Activated T-helper 1 cell treated with anti-CD3 and anti-CD28 coated beads, Interleukin-12 subunit alpha, Interleukin-12 subunit beta, Interleukin-2, Interleukin-4 antibody, amounts not matched to agents 30 ng/mL and 10 ng/mL and 1 ng/mL, durations not matched to agents 14 hours and 24 hours and 36 hours (primary cell): ENCODE measurements at regions of chr2 and their contacts with region 1.

Region 1: DNA sequence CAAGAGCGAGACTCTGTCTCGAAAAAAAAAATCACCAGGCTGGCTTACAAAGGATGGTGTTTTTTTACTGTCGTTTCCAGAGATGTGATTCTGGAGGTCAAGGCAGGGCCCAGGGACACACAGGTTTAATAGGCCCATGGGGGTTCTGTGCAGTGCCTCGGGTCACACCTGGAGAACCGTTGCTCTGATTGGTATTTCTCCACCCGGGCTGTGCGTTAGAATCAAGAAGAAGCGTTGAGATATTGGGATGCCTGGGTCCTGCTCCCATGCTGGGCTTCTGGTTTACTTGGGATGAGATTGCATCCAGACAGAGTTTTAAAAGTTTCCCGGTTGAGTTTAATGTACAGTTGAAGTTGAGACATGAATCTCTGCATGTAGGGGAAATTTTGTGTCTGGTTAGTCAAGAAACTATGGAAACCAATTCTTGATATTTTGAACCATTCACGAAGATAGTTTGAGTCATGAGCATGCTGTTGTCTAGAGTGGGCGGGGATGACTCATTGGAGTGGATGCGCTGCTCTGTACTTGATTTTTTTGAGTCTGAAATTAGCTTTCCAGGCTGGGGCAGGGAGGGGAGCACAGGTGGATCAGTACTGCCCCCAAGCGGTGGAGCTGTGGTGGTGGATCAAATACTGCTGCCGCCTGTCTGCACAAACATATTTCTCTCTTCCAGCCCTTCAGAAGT is 50.1 kb downstream of the GREB1 start:
- DNase-seq: peak; percentile 57
- H3K4me3 Mint-ChIP-seq: no peak overlapping the region
- H3K27ac Mint-ChIP-seq: peak overlapping the region; percentile 68
- H3K4me1 Mint-ChIP-seq: peaks cover 10% of the 10 kb centered on the region
- H3K27me3 Mint-ChIP-seq: peaks cover 11% of the 10 kb centered on the region

Region 2: DNA sequence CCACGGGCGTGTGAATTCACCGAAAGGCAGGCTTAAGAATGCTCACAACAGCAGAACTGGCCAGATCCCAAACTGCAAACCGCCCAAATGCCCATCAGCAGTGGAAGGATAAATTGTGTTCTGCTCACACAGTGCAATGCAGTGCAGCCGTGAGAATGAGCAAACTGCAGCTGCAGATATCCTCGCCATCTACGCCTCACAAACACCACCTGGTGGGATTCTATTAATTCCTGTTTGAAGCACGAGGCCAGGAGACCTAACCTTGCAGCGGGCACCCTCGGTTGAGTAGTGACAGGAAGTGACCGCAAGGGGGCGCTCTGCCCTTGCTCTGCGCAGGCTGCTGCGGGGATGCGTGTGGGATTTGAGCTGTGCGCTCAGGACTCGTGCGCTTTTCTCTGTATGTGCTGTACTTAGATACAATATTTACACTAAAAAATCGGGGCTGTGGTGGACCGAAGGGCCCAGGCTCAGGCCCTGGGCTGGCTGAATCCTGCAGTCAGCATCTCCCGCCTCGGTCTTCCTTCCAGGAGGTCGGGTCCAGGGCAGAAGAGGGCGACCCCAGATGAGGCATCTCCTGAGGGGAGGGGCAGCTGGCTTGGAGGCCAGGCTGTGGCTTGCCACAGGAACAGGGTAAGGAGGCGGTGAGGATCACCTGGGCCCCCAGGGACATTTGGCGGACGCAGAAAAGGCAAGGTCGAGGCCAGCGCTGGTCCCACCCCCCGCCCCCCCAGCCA is 751.6 kb before region 1 on chr2:
- intact Hi-C with region 1: loop called (anchors 1 kb)
- DNase-seq: peak; percentile 74
- H3K4me3 Mint-ChIP-seq: no peak overlapping the region
- H3K27ac Mint-ChIP-seq: no peak overlapping the region
- H3K4me1 Mint-ChIP-seq: peaks cover 6% of the 10 kb centered on the region
- H3K27me3 Mint-ChIP-seq: peaks cover 22% of the 10 kb centered on the region

Region 3: DNA sequence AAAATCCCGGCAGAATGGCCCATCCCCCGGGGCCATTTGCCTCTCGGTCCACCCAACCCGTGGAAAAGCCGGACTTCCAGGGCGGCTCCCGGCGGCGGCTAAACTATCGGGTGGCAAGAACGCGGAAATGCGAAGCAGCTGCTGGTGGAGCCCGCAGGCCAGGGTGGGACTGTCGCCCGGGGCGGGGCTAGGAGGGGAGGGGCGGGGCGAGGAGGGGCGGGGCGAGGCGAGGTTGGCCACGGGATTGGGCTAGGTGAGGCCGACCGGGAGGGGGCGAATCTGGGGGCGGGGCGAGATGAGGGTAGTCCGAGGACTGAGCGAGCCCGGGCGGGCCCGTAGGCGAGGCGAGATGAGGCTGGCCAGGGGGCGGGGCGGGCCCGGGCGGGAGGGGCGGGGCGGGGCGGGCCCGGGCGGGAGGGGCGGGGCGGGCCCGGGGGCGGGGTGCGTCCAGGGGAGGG is 429.0 kb before region 1 on chr2:
- intact Hi-C with region 1: loop called (anchors 1 kb)
- DNase-seq: peak; percentile 94
- H3K4me3 Mint-ChIP-seq: peak overlapping the region; percentile 85
- H3K27ac Mint-ChIP-seq: peak overlapping the region; percentile 83
- H3K4me1 Mint-ChIP-seq: peaks cover 12% of the 10 kb centered on the region
- H3K27me3 Mint-ChIP-seq: peaks cover 7% of the 10 kb centered on the region

Region 4: GRCh38 chr2:11344342-11344955 is 239.5 kb before region 1 on chr2 and contains the start of gene ROCK2:
- intact Hi-C with region 1: loop called (anchors 2 kb)
- DNase-seq: peak; percentile 62
- H3K4me3 Mint-ChIP-seq: peak within 1 kb of the TSS; percentile 99
- H3K27ac Mint-ChIP-seq: peak within 1 kb of the TSS; percentile 95
- H3K4me1 Mint-ChIP-seq: peaks cover 35% of the 10 kb centered on the region
- H3K27me3 Mint-ChIP-seq: peaks cover 14% of the 10 kb centered on the region
- total RNA-seq, gene ROCK2: 20.5 and 21.7 TPM in 2 replicates

Region 5: DNA sequence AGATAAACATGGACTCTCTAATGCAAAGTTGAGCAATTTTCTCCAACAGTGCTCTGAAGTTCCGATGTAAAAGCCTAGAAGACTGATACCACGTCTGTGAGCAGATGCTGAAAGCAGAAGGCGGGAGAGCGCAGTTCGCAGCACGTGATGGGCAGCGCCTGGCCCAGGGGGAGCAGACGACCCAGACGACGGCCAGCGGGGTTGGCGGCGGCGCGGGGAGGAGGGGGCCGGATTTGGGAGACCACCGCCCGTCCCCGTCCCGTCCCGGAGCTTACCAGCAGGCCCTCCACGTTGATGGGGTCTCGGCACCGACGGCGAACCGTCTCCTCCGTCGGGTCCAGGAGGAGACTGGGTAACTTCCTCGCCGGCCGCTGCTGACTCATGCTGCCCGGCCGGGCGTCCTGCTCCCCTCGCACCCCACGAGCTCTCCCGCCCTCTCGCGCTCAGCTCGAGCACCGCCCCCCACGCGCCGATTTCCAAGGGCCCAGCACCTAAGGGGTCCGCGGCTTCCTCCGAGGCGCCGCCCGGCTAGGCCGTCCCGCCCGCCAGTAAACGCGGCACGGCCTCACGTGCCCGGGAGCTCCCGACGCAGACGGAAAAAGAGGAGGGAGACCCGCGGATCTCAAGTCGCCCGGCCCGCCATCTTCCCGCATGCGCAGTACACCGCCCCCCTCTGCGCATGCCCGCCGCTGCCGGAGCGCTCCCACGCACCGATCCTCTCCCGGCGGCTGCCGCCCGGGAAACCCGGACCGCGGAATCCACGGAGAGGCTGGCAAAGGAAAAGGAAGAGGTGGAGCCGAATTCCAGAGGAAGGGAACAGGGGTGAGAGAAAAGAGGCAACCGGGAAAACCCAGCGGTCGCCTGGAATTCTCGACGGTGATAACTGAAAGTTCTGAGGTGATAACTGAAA is 118.2 kb before region 1 on chr2 and contains the start of gene E2F6:
- intact Hi-C with region 1: loop called (anchors 1 kb)
- DNase-seq: peak; percentile 82
- H3K4me3 Mint-ChIP-seq: peak within 1 kb of the TSS; percentile 86
- H3K27ac Mint-ChIP-seq: peak within 1 kb of the TSS; percentile 92
- H3K4me1 Mint-ChIP-seq: peaks cover 34% of the 10 kb centered on the region
- H3K27me3 Mint-ChIP-seq: no peaks in the 10 kb centered on the region
- total RNA-seq, gene E2F6: 22.1 and 23.7 TPM in 2 replicates

Region 6: DNA sequence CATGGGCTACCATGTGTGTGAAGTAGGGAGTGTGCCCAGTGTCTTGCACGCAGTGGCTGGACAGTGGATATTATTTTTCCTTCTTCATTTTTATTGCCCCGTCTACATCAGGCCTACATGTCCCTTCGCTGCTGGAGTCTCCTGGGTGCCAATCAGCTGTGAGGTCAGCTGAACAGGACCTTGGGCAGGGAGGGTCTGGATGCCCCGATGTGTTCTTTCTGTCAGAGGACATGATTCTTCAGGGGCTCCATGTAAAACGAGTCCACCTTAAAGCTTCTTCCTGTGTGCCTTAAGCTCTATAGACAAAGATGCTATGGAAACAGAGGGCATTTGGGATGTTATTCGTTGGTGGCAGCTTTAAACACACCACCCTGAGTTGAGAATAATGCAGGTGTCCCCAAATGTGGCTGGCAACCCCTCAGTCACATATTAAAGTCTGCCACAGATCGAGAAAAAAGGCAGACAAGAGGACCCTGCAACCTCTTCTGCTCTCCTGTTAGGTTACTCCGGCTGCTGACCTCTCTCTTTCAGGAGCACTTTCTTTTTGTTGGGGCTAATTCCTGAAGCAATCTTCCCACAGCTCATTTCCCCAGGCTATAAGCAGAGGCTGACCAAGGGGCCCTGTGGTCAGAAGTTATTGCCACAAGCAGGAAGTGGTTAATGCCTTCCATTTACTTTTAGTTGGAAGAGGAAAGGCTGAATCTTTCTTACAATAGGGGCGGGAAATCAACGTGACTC is 30.2 kb before region 1 on chr2:
- intact Hi-C with region 1: no loop called
- DNase-seq: no peak
- H3K4me3 Mint-ChIP-seq: no peak overlapping the region
- H3K27ac Mint-ChIP-seq: no peak overlapping the region
- H3K4me1 Mint-ChIP-seq: no peaks in the 10 kb centered on the region
- H3K27me3 Mint-ChIP-seq: peaks cover 27% of the 10 kb centered on the region

Region 7: GRCh38 chr2:11743846-11744553 is 160.0 kb after region 1 on chr2:
- intact Hi-C with region 1: loop called (anchors 2 kb)
- DNase-seq: peak; percentile 67
- H3K4me3 Mint-ChIP-seq: peak overlapping the region; percentile 0
- H3K27ac Mint-ChIP-seq: peak overlapping the region; percentile 79
- H3K4me1 Mint-ChIP-seq: peaks cover 55% of the 10 kb centered on the region
- H3K27me3 Mint-ChIP-seq: peaks cover 3% of the 10 kb centered on the region